Mucosa of descending colon (tissue), 3 donors: ENCODE measurements at regions of chr18 and their contacts with region 1.

Region 1: GRCh38 chr18:9334329-9334972 is at the start of gene TWSG1:
- DNase-seq: peak; percentile 94 to 96 (median 95)
- ATAC-seq: peak; percentile 95
- H3K4me3 ChIP-seq: peak within 1 kb of the TSS; percentile 52
- H3K4me1 ChIP-seq: peaks cover 4% of the 10 kb centered on the region
- CTCF ChIP-seq: peak; percentile 28
- total RNA-seq, gene TWSG1: 10.5 to 45.3 (median 17.8) TPM

Region 2: GRCh38 chr18:9079818-9080528 is 254.5 kb before region 1 on chr18:
- intact Hi-C with region 1: loop called in 1 of 2 experiments (anchors 10 kb)
- DNase-seq: no peak
- ATAC-seq: no peak
- H3K4me3 ChIP-seq: no peak overlapping the region
- H3K4me1 ChIP-seq: no peaks in the 10 kb centered on the region
- CTCF ChIP-seq: no peak

Region 3: GRCh38 chr18:9275890-9276289 is 58.6 kb before region 1 on chr18:
- intact Hi-C with region 1: loop called in 1 of 2 experiments (anchors 10 kb)
- DNase-seq: peak in 1 of 3 donors; percentile 9
- ATAC-seq: peak; percentile 77
- H3K4me3 ChIP-seq: no peak overlapping the region
- H3K4me1 ChIP-seq: no peaks in the 10 kb centered on the region
- CTCF ChIP-seq: no peak